ENCODE measurements at regions of chr2 and their contacts with region 1.

Region 1: DNA sequence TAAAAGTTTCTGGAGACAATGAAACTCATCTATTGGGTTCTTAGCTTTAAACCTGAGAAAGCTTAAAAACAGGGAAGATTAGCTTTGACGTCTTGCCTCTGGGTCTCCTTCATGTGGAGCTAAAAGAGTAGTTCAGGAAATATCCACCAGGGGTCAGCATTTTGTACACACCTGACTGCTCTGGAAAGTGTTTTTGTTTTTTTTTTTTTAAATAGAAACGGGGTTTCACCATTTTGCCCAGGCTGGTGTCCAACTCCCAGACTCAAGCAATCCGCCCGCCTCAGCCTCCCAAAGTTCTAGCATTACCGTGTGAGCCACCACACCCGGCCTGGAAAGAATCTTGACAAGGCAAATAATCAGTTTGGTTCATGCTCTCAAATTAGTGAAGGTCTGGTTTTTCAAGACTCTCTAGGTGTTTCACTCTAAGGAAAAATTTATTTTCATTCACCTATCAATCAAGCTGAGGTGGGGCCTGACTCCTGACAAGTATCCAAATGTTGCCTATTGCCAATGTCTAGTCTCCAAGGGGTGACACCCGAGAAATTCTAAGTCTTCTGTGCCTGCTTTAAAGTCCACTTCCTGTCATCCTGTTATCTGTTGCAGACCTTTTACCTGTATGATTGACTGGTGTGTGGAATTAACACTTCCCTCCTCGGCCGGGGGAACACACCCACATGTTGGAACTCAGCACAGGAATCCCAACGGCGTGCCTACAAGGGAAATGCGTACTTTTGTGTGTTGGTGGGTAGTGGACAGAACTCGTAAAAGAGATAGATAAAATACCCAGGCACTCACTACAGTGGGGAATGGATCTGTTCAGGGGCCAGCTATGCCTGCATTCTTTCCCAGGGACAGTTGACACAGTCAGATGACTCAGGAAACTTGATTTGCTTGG is 11.3 kb downstream of the IL1RN start:
- DNase-seq: no peak
- H3K4me3 ChIP-seq: no peak overlapping the region
- CTCF ChIP-seq: peak; percentile 54

Region 2: GRCh38 chr2:112692496-112692911 is 446.2 kb before region 1 on chr2:
- CTCF ChIA-PET with region 1: no interaction called
- POLR2A ChIA-PET with region 1: no interaction called
- DNase-seq: peak; percentile 63
- H3K4me3 ChIP-seq: no peak overlapping the region
- CTCF ChIP-seq: no peak

Region 3: DNA sequence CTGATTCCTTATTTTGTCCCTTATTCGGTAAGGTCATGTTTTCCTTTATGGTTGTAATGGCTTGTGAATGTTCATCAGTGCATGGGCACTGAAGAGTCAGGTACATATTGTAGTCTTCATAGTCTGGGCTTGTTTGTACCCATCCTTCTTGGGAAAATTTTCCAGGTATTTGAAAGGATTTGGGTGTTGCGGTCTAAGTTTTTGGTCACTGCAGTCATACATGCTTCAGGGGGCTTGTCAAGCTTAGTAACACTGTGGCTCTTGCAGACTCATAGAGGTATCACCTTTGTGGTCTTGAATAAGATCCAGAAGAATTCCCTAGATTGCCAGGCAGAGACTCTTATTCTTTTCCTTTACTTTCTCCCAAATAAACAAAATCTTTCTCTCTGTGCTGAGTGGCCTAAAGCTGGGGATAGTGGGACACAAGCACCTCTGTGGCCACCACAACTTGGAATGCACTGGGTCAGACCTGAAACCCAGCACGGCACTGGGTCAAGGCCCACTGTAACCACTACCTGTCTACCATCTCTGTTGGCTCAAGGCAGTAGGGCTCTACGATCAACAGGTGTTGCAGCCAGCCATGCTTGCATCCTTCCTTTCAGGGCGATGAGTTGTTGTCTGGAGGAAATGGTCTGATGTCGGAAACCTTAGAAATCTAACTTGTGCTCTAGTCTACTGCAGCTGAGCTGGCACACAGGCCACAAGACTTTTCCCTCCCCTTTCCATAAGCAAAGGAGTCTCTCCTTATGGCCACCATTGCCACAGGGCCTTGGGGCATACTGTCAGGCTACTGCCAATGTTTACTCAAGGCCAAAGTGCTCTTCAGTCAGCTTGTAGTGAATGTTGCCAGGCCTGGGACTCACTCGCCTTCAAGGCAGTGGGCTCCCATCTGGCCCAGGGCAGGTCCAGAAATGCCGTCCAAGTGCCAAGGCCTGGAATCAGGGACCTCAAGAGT is 10.2 kb after region 1 on chr2:
- CTCF ChIA-PET with region 1: interaction called, 39 read pairs
- POLR2A ChIA-PET with region 1: no interaction called
- DNase-seq: no peak
- H3K4me3 ChIP-seq: no peak overlapping the region
- CTCF ChIP-seq: no peak

Region 4: GRCh38 chr2:113173542-113174395 is 35.1 kb after region 1 on chr2 and contains the start of gene PSD4:
- CTCF ChIA-PET with region 1: interaction called, 59 read pairs
- POLR2A ChIA-PET with region 1: no interaction called
- DNase-seq: no peak
- H3K4me3 ChIP-seq: no peak within 1 kb of the TSS
- CTCF ChIP-seq: no peak

Region 5: GRCh38 chr2:113203901-113204519 is 65.3 kb after region 1 on chr2:
- CTCF ChIA-PET with region 1: interaction called, 191 read pairs
- POLR2A ChIA-PET with region 1: no interaction called
- DNase-seq: no peak
- H3K4me3 ChIP-seq: no peak overlapping the region
- CTCF ChIP-seq: peak; percentile 89

Region 6: DNA sequence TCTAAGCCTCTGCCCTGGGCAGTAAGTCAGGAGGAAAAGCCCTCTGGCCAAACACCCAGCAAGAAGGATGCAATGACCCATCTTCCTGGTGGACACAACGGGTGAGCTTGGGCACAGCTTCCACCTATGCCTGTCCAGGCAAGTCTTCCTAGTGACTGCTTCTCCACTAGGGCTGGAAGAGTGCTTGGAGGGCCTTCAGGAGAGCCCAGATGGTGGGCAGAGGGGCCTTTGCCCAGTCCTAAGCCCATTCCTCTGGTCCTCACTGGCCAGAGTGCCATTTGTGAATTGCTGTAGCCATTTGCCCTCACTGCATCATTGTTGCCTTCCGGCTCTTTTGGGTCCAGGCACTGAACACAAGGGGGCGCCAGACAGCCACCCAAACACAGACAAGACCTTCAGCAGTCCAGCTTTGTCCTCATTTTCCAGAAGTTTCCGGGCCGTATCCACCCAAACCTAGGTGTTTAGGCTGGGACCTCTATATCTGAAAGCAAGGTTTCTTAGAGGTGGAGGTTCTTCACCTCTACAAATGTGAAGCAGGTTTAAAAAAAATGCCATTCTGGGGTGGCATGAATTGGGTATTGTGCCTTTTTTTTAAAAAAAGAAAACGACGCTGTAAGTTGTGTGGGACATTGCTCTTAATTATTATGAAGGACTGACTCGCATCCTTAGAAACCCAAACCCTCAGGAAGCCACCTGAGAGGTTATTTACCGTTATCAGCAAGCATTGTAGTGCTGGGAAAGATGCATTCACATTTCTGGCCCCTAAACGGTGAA is 110.5 kb after region 1 on chr2:
- CTCF ChIA-PET with region 1: interaction called, 58 read pairs
- POLR2A ChIA-PET with region 1: no interaction called
- DNase-seq: no peak
- H3K4me3 ChIP-seq: no peak overlapping the region
- CTCF ChIP-seq: peak; percentile 91

Region 7: DNA sequence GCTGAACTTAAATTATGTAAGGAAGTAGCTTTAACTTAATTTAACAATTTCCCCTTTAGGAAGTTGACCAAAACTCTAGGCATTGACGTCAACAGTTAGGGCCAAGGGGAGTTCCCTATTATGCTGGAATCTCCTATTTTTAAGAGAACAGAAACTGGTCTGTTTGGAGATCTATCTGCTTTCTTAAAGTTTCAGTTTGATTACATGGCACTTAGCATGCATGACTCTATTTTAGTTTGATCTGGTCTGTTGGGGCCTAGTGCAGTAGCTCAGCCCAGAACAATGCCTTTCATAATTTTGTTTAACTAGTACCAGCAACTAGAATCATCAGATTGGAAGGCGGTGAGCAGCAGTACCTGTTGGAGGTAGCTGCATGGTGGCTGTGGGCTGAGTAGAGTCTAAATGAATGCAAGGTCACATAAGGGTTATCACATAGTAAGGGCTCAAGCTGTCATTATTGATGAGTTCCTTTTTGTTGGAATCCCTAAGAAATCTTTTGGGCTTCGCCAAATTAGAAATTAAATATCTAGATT is 238.3 kb after region 1 on chr2:
- CTCF ChIA-PET with region 1: interaction called, 120 read pairs
- POLR2A ChIA-PET with region 1: no interaction called
- DNase-seq: no peak
- H3K4me3 ChIP-seq: no peak overlapping the region
- CTCF ChIP-seq: no peak

Measured in AG04449 (cell line).